ENCODE measurements at regions of chr20 and their contacts with region 1.

Region 1: DNA sequence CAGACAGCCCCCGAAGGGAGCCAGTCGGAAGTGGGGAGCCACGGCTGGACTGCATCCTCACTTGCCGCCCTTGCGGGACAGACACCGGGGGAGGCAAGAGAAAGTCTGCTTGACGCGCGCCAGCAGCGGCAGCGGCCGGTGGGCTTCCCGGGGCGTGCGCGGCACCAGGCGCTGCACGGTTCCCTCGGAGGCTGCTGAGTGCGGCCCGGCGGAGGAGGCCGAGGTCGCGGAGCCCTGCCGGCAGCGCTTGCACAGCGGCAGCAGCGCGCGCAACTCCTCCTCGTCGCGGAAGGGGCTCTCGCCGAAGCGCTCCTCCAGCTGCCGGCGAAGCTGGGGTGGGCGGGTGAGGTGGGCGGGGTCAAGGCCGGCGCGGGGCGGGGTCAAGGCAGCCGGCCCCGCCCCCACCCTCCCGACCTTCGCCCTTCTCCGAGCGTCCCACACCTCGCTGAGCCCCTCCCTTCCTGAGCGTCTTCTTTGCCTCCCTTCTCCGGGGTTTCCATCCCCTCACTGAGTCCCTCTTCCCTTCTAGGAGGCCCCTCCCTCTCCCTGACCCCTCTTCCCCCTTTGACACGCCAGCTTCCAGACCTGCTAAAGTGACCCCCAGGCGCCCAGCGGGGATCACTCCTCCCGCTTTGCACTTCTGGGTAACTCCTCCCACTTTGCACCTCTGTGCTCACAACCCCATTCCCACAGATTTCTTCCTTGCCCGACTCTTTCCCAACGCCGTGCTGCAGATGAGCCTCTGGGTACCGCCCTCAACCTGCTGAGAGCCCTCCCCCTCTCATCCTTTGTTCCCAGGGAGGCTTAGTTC is 8.8 kb downstream of the DUSP15 start:
- DNase-seq: peak; percentile 52 to 69 (median 64)
- H3K4me3 ChIP-seq: peak overlapping the region in 1 of 2 donors; percentile 49
- H3K4me3 Mint-ChIP-seq: peak overlapping the region; percentile 46 to 74 (median 54)
- H3K27ac ChIP-seq: no peak overlapping the region
- H3K27ac Mint-ChIP-seq: peak overlapping the region in 1 of 7 donors; percentile 49
- H3K4me1 ChIP-seq: peaks cover 12% of the 10 kb centered on the region
- H3K4me1 Mint-ChIP-seq: peaks cover 0 to 14% (median 3%) of the 10 kb centered on the region in 4 donors
- H3K27me3 ChIP-seq: peaks cover 29% of the 10 kb centered on the region
- H3K27me3 Mint-ChIP-seq: peaks cover 11 to 22% of the 10 kb centered on the region in 2 donors

Region 2: GRCh38 chr20:31760519-31761240 is 100.9 kb before region 1 on chr20:
- CTCF ChIA-PET with region 1: no interaction called
- POLR2A ChIA-PET with region 1: no interaction called
- intact Hi-C with region 1: no loop called
- DNase-seq: no peak
- H3K4me3 ChIP-seq: no peak overlapping the region
- H3K4me3 Mint-ChIP-seq: no peak overlapping the region
- H3K27ac ChIP-seq: no peak overlapping the region
- H3K27ac Mint-ChIP-seq: peak overlapping the region in 1 of 7 donors; percentile 7
- H3K4me1 ChIP-seq: no peaks in the 10 kb centered on the region
- H3K4me1 Mint-ChIP-seq: peaks cover 0 to 8% (median 3%) of the 10 kb centered on the region in 4 donors
- H3K27me3 ChIP-seq: no peaks in the 10 kb centered on the region
- H3K27me3 Mint-ChIP-seq: no peaks in the 10 kb centered on the region

Region 3: GRCh38 chr20:31849455-31849925 is 12.1 kb before region 1 on chr20:
- CTCF ChIA-PET with region 1: interaction called, 24 read pairs
- POLR2A ChIA-PET with region 1: no interaction called
- intact Hi-C with region 1: no loop called
- DNase-seq: no peak
- H3K4me3 ChIP-seq: no peak overlapping the region
- H3K4me3 Mint-ChIP-seq: no peak overlapping the region
- H3K27ac ChIP-seq: no peak overlapping the region
- H3K27ac Mint-ChIP-seq: no peak overlapping the region
- H3K4me1 ChIP-seq: no peaks in the 10 kb centered on the region
- H3K4me1 Mint-ChIP-seq: no peaks in the 10 kb centered on the region
- H3K27me3 ChIP-seq: no peaks in the 10 kb centered on the region
- H3K27me3 Mint-ChIP-seq: peaks cover 11 to 21% of the 10 kb centered on the region in 2 donors

Region 4: GRCh38 chr20:31879143-31879987 is 17.8 kb after region 1 on chr20:
- CTCF ChIA-PET with region 1: no interaction called
- POLR2A ChIA-PET with region 1: no interaction called
- intact Hi-C with region 1: loop called (anchors 1 kb)
- DNase-seq: peak; percentile 69 to 84 (median 76)
- H3K4me3 ChIP-seq: peak overlapping the region; percentile 21 to 69
- H3K4me3 Mint-ChIP-seq: peak overlapping the region; percentile 90 to 96 (median 94)
- H3K27ac ChIP-seq: no peak overlapping the region
- H3K27ac Mint-ChIP-seq: peak overlapping the region; percentile 78 to 97 (median 89)
- H3K4me1 ChIP-seq: peaks cover 7% of the 10 kb centered on the region
- H3K4me1 Mint-ChIP-seq: peaks cover 6 to 15% (median 8%) of the 10 kb centered on the region in 4 donors
- H3K27me3 ChIP-seq: no peaks in the 10 kb centered on the region
- H3K27me3 Mint-ChIP-seq: peaks cover 8% of the 10 kb centered on the region in 2 donors

Measured in CD4-positive, alpha-beta memory T cell (primary cell).